PC-9 (cell line): ENCODE measurements at regions of chr2 and their contacts with region 1.

Region 1: GRCh38 chr2:142128105-142128504 is 2.7 kb downstream of the LRP1B start:
- DNase-seq: no peak
- H3K4me3 ChIP-seq: no peak overlapping the region
- H3K27ac ChIP-seq: no peak overlapping the region
- H3K4me1 ChIP-seq: peaks cover 8% of the 10 kb centered on the region
- H3K27me3 ChIP-seq: no peaks in the 10 kb centered on the region
- CTCF ChIP-seq: no peak

Region 2: DNA sequence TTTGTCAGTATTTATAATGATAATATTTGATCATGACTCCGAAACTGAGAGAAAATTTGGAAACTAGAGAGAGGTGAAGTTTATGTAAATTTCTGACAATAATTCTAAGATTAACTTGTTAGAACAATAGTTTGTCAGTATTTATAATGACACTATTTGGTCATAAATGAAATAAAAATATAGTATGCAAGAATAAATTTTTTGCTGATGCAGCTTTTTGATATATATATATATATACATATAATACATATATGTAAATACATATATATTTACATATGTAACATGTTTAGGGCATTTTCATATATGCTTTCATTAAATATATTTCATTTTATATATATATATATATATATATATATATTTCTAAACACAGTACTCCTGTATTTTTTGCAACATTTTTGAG is 1155.4 kb before region 1 on chr2:
- CTCF ChIA-PET with region 1: no interaction called
- POLR2A ChIA-PET with region 1: no interaction called
- intact Hi-C with region 1: loop called (anchors 10 kb)
- DNase-seq: no peak
- H3K4me3 ChIP-seq: no peak overlapping the region
- H3K27ac ChIP-seq: no peak overlapping the region
- H3K4me1 ChIP-seq: no peaks in the 10 kb centered on the region
- H3K27me3 ChIP-seq: no peaks in the 10 kb centered on the region
- CTCF ChIP-seq: no peak

Region 3: GRCh38 chr2:141331127-141331526 is 797.0 kb before region 1 on chr2:
- CTCF ChIA-PET with region 1: no interaction called
- POLR2A ChIA-PET with region 1: no interaction called
- intact Hi-C with region 1: no loop called
- DNase-seq: no peak
- H3K4me3 ChIP-seq: no peak overlapping the region
- H3K27ac ChIP-seq: no peak overlapping the region
- H3K4me1 ChIP-seq: no peaks in the 10 kb centered on the region
- H3K27me3 ChIP-seq: no peaks in the 10 kb centered on the region
- CTCF ChIP-seq: no peak

Region 4: DNA sequence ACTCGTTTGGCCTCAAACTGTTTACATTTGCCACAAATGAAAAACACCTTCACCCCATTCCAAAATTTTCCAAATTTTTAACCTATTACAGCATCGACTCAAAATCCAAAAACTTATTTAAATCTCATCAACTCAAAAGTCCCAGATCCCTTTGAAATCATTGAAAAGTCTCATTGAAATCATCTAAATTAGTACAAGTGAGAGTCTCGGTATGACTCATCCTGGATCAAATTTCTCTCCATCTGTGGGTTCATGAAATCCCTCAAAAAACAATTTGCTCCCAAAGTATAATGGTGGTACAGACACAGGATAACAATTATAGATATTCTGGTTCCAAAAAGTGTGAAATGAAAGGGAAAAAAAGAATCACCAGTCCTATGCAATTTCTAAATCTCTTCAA is 62.4 kb before region 1 on chr2:
- CTCF ChIA-PET with region 1: no interaction called
- POLR2A ChIA-PET with region 1: no interaction called
- intact Hi-C with region 1: no loop called
- DNase-seq: no peak
- H3K4me3 ChIP-seq: no peak overlapping the region
- H3K27ac ChIP-seq: no peak overlapping the region
- H3K4me1 ChIP-seq: no peaks in the 10 kb centered on the region
- H3K27me3 ChIP-seq: no peaks in the 10 kb centered on the region
- CTCF ChIP-seq: no peak

Region 5: GRCh38 chr2:142180820-142181535 is 52.9 kb after region 1 on chr2:
- CTCF ChIA-PET with region 1: no interaction called
- POLR2A ChIA-PET with region 1: no interaction called
- intact Hi-C with region 1: no loop called
- DNase-seq: no peak
- H3K4me3 ChIP-seq: no peak overlapping the region
- H3K27ac ChIP-seq: no peak overlapping the region
- H3K4me1 ChIP-seq: peaks cover 10% of the 10 kb centered on the region; the same call in 1 of the 2 replicates
- H3K27me3 ChIP-seq: no peaks in the 10 kb centered on the region
- CTCF ChIP-seq: peak; percentile 26; the same call in 1 of the 2 replicates